Heart left ventricle (tissue), 16 donors: ENCODE measurements at regions of chr13 and their contacts with region 1.

Region 1: DNA sequence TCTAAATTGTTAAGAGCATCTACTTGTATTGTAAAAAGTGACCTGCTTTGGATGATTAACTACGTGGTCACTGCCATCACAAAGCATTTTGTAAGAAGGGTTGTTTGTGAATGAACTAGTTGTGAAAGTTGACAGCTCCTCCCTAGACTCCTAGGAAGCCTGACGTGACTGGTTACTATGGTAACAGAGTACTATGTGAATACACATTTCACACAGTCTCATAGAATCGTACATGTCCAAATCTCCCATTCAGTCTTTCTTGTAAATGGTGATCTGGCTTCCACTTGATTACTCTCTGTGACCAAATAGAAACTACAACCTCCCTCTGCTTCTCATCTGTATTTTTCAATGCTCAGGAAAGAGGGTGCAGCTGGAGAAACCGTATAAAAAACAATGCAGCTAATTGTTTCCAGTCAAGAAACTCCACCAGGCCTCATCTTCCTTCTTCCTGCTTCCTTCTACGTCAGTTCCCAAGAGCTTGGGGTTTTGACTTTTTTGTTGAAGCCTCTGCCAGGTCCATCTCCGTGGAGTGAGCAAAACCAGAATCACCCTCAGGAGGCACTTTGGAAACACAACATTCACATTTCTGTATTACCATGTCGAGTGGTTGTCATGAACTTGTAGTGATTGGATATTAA is 83.4 kb downstream of the GPC6 start:
- DNase-seq: no peak
- ATAC-seq: no peak
- H3K4me3 ChIP-seq: no peak overlapping the region
- H3K27ac ChIP-seq: no peak overlapping the region
- H3K4me1 ChIP-seq: no peaks in the 10 kb centered on the region
- H3K27me3 ChIP-seq: no peaks in the 10 kb centered on the region
- CTCF ChIP-seq: no peak
- POLR2A ChIP-seq: no peak

Region 2: GRCh38 chr13:93144031-93144430 is 166.0 kb before region 1 on chr13:
- intact Hi-C with region 1: loop called in 1 of 10 experiments (anchors 10 kb)
- DNase-seq: no peak
- ATAC-seq: no peak
- H3K4me3 ChIP-seq: no peak overlapping the region
- H3K27ac ChIP-seq: no peak overlapping the region
- H3K4me1 ChIP-seq: no peaks in the 10 kb centered on the region
- H3K27me3 ChIP-seq: no peaks in the 10 kb centered on the region
- CTCF ChIP-seq: no peak
- POLR2A ChIP-seq: no peak

Region 3: GRCh38 chr13:93328943-93329342 is 18.9 kb after region 1 on chr13:
- intact Hi-C with region 1: no loop called
- DNase-seq: no peak
- ATAC-seq: no peak
- H3K4me3 ChIP-seq: no peak overlapping the region
- H3K27ac ChIP-seq: no peak overlapping the region
- H3K4me1 ChIP-seq: no peaks in the 10 kb centered on the region
- H3K27me3 ChIP-seq: no peaks in the 10 kb centered on the region
- CTCF ChIP-seq: no peak
- POLR2A ChIP-seq: no peak